ENCODE measurements at regions of chr15 and their contacts with region 1.

Region 1: GRCh38 chr15:37995461-37996347 is 61.3 kb downstream of the TMCO5A start:
- DNase-seq: peak; percentile 26
- ATAC-seq: peak; percentile 93
- H3K4me3 ChIP-seq: no peak overlapping the region
- H3K27ac ChIP-seq: no peak overlapping the region
- H3K4me1 ChIP-seq: no peaks in the 10 kb centered on the region
- H3K27me3 ChIP-seq: no peaks in the 10 kb centered on the region; a peak in 1 of 4 replicates
- CTCF ChIP-seq: peak; percentile 49 to 78 (median 54); a peak in 5 of 6 replicates
- EP300 ChIP-seq: no peak
- POLR2A ChIP-seq: no peak
- RAD21 ChIP-seq: peak; percentile 91

Region 2: DNA sequence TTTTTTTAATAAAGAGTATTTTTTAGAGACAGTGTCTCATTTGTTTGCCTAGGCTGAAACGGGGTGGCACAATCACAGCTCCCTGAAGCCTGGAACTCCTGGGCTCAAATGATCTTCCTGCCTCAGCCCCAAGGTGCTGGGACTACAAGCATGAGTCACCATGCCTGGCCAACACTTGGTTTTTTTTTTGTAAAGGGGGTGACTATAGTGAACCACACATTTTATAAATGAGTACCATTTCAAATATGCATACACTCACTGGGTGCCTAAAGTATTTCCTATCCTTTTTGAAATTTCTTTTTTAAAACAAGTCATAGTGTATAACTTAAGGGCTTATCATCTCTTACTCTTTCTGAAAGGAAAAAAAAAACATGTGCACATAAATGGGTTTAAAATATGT is 570.2 kb before region 1 on chr15:
- CTCF ChIA-PET with region 1: no interaction called
- POLR2A ChIA-PET with region 1: no interaction called
- RAD21 ChIA-PET with region 1: no interaction called
- SMC1A ChIA-PET with region 1: no interaction called
- in situ Hi-C with region 1: no loop called
- intact Hi-C with region 1: no loop called
- DNase-seq: no peak
- ATAC-seq: no peak
- H3K4me3 ChIP-seq: no peak overlapping the region
- H3K27ac ChIP-seq: no peak overlapping the region
- H3K4me1 ChIP-seq: no peaks in the 10 kb centered on the region
- H3K27me3 ChIP-seq: no peaks in the 10 kb centered on the region
- CTCF ChIP-seq: no peak
- EP300 ChIP-seq: no peak
- POLR2A ChIP-seq: no peak
- RAD21 ChIP-seq: no peak

Region 3: DNA sequence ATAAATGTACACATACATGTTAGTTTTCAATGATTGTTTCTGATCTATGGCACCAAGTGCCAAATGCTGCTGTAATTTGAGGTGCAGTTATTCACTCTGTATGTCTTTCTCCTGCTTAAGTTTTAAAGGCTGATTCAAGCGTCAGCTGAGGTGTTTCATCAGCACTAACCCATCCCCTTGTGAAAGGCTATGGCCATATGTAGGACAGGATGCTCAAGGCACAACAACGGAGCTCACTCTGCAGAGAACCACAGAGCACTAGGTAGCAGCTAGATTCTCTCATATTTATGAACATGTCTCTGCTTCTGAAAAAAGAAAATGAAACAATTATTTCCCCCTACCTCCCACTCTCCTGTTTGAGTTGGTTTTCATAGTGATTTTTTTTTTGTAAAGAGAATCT is 401.3 kb before region 1 on chr15:
- CTCF ChIA-PET with region 1: no interaction called
- POLR2A ChIA-PET with region 1: no interaction called
- RAD21 ChIA-PET with region 1: no interaction called
- SMC1A ChIA-PET with region 1: no interaction called
- in situ Hi-C with region 1: no loop called
- intact Hi-C with region 1: no loop called
- DNase-seq: no peak
- ATAC-seq: no peak
- H3K4me3 ChIP-seq: no peak overlapping the region
- H3K27ac ChIP-seq: no peak overlapping the region
- H3K4me1 ChIP-seq: no peaks in the 10 kb centered on the region
- H3K27me3 ChIP-seq: no peaks in the 10 kb centered on the region
- CTCF ChIP-seq: no peak
- EP300 ChIP-seq: no peak
- POLR2A ChIP-seq: no peak
- RAD21 ChIP-seq: no peak

Region 4: DNA sequence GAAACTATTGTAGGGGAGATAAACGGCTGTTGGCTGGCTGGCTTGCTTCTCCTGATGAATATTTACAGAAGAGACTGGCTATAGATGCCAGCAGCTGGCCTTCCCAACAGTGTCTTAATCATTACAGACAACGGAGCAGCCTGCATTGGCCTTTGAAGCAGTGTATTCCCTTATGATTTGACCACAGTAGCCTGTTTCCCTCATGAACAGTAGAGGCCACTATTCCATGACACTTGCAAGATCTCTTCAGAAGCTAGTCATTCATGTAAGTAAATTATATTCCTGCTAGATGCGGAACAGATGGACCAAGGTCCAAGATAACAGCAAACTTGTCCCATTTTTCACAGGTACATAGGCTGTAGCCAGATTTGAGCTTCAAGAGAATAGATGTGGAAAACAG is 13.9 kb before region 1 on chr15:
- CTCF ChIA-PET with region 1: interaction called, 13 read pairs
- POLR2A ChIA-PET with region 1: no interaction called
- RAD21 ChIA-PET with region 1: no interaction called
- SMC1A ChIA-PET with region 1: interaction called, 4 read pairs
- in situ Hi-C with region 1: no loop called
- intact Hi-C with region 1: no loop called
- DNase-seq: no peak
- ATAC-seq: 0 out of 3 replicates have a peak, but pooled peaks have one; percentile 24
- H3K4me3 ChIP-seq: no peak overlapping the region
- H3K27ac ChIP-seq: no peak overlapping the region
- H3K4me1 ChIP-seq: no peaks in the 10 kb centered on the region
- H3K27me3 ChIP-seq: no peaks in the 10 kb centered on the region
- CTCF ChIP-seq: peak in 2 of 3 experiments; percentile 26 to 32; a peak in 2 of 6 replicates
- EP300 ChIP-seq: no peak
- POLR2A ChIP-seq: no peak
- RAD21 ChIP-seq: no peak

Region 5: DNA sequence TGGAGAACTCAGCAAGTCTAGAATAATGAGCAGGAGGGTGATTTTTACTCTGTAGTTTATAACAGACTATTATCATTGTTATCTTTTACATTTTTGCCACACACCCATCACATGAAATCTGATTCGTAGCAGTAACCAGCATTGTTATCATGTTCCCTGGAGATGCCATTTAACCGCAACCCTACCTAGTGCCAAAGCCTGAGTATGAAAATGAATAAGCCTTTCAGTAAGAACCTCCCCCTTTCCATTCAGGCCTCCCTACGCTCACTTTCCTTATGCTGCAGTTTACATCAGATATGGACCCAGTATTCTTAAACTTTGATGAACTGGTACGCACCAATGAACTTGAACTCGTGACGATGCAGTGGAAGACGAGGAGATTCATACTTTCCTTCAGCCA is 98.2 kb after region 1 on chr15:
- CTCF ChIA-PET with region 1: no interaction called
- POLR2A ChIA-PET with region 1: no interaction called
- RAD21 ChIA-PET with region 1: no interaction called
- SMC1A ChIA-PET with region 1: no interaction called
- in situ Hi-C with region 1: no loop called
- intact Hi-C with region 1: no loop called
- DNase-seq: no peak
- ATAC-seq: no peak
- H3K4me3 ChIP-seq: no peak overlapping the region
- H3K27ac ChIP-seq: no peak overlapping the region
- H3K4me1 ChIP-seq: no peaks in the 10 kb centered on the region
- H3K27me3 ChIP-seq: no peaks in the 10 kb centered on the region
- CTCF ChIP-seq: no peak
- EP300 ChIP-seq: no peak
- POLR2A ChIP-seq: no peak
- RAD21 ChIP-seq: no peak

Region 6: GRCh38 chr15:38243278-38244055 is 247.8 kb after region 1 on chr15:
- CTCF ChIA-PET with region 1: interaction called, 4 read pairs
- POLR2A ChIA-PET with region 1: no interaction called
- RAD21 ChIA-PET with region 1: interaction called, 3 read pairs
- SMC1A ChIA-PET with region 1: interaction called, 12 read pairs
- in situ Hi-C with region 1: no loop called
- intact Hi-C with region 1: no loop called
- DNase-seq: no peak
- ATAC-seq: no peak
- H3K4me3 ChIP-seq: no peak overlapping the region
- H3K27ac ChIP-seq: no peak overlapping the region
- H3K4me1 ChIP-seq: peaks cover 3% of the 10 kb centered on the region; the same call in 1 of the 2 replicates
- H3K27me3 ChIP-seq: no peaks in the 10 kb centered on the region; a peak in 1 of 4 replicates
- CTCF ChIP-seq: no peak
- EP300 ChIP-seq: no peak
- POLR2A ChIP-seq: no peak
- RAD21 ChIP-seq: no peak

Region 7: GRCh38 chr15:38389924-38390542 is 394.3 kb after region 1 on chr15:
- CTCF ChIA-PET with region 1: interaction called, 82 read pairs
- POLR2A ChIA-PET with region 1: no interaction called
- RAD21 ChIA-PET with region 1: interaction called, 32 read pairs
- SMC1A ChIA-PET with region 1: interaction called, 63 read pairs
- in situ Hi-C with region 1: no loop called
- intact Hi-C with region 1: loop called (anchors 1 kb)
- DNase-seq: peak; percentile 15
- ATAC-seq: peak; percentile 91
- H3K4me3 ChIP-seq: no peak overlapping the region
- H3K27ac ChIP-seq: no peak overlapping the region
- H3K4me1 ChIP-seq: no peaks in the 10 kb centered on the region
- H3K27me3 ChIP-seq: no peaks in the 10 kb centered on the region
- CTCF ChIP-seq: peak; percentile 80 to 88 (median 83)
- EP300 ChIP-seq: no peak
- POLR2A ChIP-seq: no peak
- RAD21 ChIP-seq: peak; percentile 79

Region 8: GRCh38 chr15:38474155-38474757 is 478.6 kb after region 1 on chr15:
- CTCF ChIA-PET with region 1: interaction called, 10 read pairs
- POLR2A ChIA-PET with region 1: no interaction called
- RAD21 ChIA-PET with region 1: interaction called, 3 read pairs
- SMC1A ChIA-PET with region 1: interaction called, 3 read pairs
- in situ Hi-C with region 1: no loop called
- intact Hi-C with region 1: no loop called
- DNase-seq: peak; percentile 33
- ATAC-seq: peak; percentile 99
- H3K4me3 ChIP-seq: no peak overlapping the region
- H3K27ac ChIP-seq: no peak overlapping the region
- H3K4me1 ChIP-seq: no peaks in the 10 kb centered on the region
- H3K27me3 ChIP-seq: no peaks in the 10 kb centered on the region
- CTCF ChIP-seq: peak; percentile 67 to 92 (median 74); a peak in 5 of 6 replicates
- EP300 ChIP-seq: no peak
- POLR2A ChIP-seq: no peak
- RAD21 ChIP-seq: peak; percentile 84